Activated CD4-positive, alpha-beta memory T cell treated with anti-CD3 and anti-CD28 coated beads for 36 hours (primary cell): ENCODE measurements at regions of chr18 and their contacts with region 1.

Region 1: DNA sequence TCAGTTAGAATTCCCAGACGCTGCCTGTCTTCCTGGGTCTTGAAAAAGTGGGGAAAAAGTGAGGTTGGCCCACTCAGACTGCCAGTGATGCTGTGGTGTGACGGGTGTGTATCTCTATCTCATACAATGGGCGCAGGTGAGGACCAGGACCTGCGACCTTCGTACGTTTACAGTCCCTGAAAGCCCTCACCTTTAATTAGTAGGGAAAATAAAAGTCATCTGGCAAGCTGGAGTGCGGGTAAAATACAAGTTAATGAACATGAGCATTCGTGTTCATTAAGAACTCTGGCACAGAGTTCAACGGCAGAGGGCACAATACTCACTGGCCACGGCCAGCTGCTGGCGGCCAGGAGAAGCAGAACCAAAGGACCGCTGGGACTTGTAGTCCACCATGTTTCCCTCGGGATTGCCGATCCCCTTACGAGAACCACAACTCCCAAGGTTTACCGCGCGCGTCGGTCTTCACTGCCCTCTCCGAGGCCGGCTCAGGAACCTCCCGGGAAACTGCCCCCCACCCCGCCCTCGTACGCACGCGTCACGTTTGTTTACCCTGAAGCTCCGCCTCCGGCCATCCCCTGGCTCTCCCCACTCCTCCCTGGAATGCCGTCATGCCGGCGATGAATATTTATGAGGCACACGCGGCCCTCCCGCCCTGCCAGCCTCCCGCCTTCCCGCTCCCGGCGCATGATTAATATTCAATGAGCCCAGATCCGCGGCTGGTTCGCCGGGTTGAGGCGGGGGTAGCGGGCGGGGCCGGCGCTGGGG is 488 bp upstream of the PHLPP1 start:
- DNase-seq: peak; percentile 97
- H3K4me3 Mint-ChIP-seq: peak overlapping the region; percentile 78
- H3K27ac Mint-ChIP-seq: peak overlapping the region; percentile 66
- H3K4me1 Mint-ChIP-seq: peaks cover 31% of the 10 kb centered on the region
- H3K27me3 Mint-ChIP-seq: peaks cover 2% of the 10 kb centered on the region

Region 2: DNA sequence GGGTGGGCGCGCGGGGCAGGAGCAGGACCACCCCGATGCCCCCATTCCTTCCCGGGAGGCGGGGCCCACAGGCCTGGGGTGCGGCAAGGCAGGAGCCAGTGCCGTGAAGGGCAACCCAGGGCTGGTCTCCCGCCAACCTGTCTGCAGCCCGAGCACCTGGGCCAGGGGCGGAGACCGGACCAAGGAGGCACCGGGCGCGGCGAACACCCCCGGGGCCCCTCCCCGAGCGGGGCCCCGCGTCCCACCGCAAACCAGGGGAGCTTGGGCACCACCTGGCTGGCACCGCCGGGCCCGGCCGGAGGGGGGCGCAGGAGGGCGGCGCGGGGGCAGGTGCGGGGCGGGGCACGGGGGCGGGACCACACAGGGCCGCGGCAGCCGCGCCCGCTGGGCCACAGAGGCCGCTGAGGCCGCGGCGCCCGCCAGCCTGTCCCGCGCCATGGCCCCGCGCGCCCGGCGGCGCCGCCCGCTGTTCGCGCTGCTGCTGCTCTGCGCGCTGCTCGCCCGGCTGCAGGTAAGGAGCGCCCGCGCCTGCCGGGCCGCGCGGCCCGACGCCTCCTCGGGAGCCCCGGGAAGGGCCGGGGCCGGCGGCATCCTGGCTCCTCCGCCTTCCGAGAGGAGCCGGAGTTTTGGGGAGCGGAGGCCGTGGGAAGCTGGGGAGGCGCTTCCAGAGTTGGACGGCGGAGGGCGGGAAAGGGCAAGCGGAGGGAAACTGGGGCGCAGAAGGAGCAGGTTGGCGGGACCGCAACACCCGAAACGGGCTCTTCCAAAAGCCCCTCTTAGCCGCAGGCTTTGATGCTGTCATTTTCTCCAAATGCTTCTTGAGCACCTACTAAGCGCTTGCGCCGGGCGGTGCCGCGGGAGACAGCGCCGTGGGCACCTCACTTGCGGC is 389.7 kb before region 1 on chr18 and contains the start of gene TNFRSF11A:
- CTCF ChIA-PET with region 1: no interaction called
- POLR2A ChIA-PET with region 1: no interaction called
- intact Hi-C with region 1: loop called (anchors 5 kb)
- DNase-seq: peak; percentile 79
- H3K4me3 Mint-ChIP-seq: peak within 1 kb of the TSS; percentile 79
- H3K27ac Mint-ChIP-seq: peak within 1 kb of the TSS; percentile 46
- H3K4me1 Mint-ChIP-seq: peaks cover 28% of the 10 kb centered on the region
- H3K27me3 Mint-ChIP-seq: peaks cover 68% of the 10 kb centered on the region
- total RNA-seq, gene TNFRSF11A: 5.7 to 6.1 TPM

Region 3: GRCh38 chr18:62741118-62741566 is 26.3 kb after region 1 on chr18:
- CTCF ChIA-PET with region 1: interaction called, 3 read pairs
- POLR2A ChIA-PET with region 1: no interaction called
- intact Hi-C with region 1: loop called (anchors 1 kb)
- DNase-seq: peak; percentile 26
- H3K4me3 Mint-ChIP-seq: no peak overlapping the region
- H3K27ac Mint-ChIP-seq: peak overlapping the region; percentile 36
- H3K4me1 Mint-ChIP-seq: peaks cover 20% of the 10 kb centered on the region
- H3K27me3 Mint-ChIP-seq: no peaks in the 10 kb centered on the region

Region 4: GRCh38 chr18:62784966-62785413 is 70.1 kb after region 1 on chr18:
- CTCF ChIA-PET with region 1: interaction called, 12 read pairs
- POLR2A ChIA-PET with region 1: no interaction called
- intact Hi-C with region 1: loop called (anchors 1 kb)
- DNase-seq: no peak
- H3K4me3 Mint-ChIP-seq: no peak overlapping the region
- H3K27ac Mint-ChIP-seq: peak overlapping the region; percentile 73
- H3K4me1 Mint-ChIP-seq: peaks cover 52% of the 10 kb centered on the region
- H3K27me3 Mint-ChIP-seq: peaks cover 3% of the 10 kb centered on the region

Region 5: GRCh38 chr18:62957885-62958472 is 243.1 kb after region 1 on chr18:
- CTCF ChIA-PET with region 1: interaction called, 65 read pairs
- POLR2A ChIA-PET with region 1: no interaction called
- intact Hi-C with region 1: loop called (anchors 1 kb)
- DNase-seq: peak; percentile 68
- H3K4me3 Mint-ChIP-seq: no peak overlapping the region
- H3K27ac Mint-ChIP-seq: no peak overlapping the region
- H3K4me1 Mint-ChIP-seq: peaks cover 5% of the 10 kb centered on the region
- H3K27me3 Mint-ChIP-seq: no peaks in the 10 kb centered on the region